ENCODE measurements at regions of chr6 and their contacts with region 1.

Region 1: DNA sequence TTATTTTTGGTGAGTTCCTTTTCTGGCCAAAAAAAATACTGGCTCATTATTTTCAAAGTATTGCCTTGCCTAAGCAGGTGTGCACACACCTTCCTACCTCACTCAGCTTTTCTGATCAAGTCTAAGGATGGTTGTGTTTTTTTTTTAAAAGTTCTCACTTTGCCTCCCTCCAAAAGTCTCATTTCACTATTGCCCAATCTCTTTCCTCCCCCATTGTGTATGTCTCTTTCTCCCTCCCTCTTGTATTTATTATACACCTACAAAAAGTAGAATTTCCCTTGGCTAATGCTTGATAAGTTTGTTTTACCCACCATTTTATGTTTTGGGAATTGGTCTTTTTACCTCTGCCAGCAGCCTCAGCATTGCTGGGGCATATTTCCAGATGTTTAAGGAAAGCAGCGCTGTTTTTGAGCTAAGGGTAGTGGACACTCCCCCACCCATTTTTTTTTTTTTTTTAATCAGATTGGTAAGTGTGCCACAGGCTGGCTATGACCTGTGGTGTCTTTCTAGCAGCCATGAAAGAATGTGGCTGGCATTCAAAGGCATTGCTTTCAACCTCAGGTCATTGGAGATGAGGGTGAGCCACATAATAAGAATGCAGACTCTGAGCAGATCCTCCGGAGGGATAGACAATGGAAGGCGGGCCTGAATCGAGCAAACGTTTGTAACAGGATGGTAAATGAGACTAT is 668.6 kb downstream of the UTRN start:
- DNase-seq: peak; percentile 37
- H3K4me3 ChIP-seq: no peak overlapping the region
- H3K27ac ChIP-seq: peak overlapping the region; percentile 98
- H3K4me1 ChIP-seq: peaks cover 36% of the 10 kb centered on the region
- H3K27me3 ChIP-seq: no peaks in the 10 kb centered on the region
- CTCF ChIP-seq: no peak

Region 2: GRCh38 chr6:144590532-144590931 is 363.2 kb before region 1 on chr6:
- CTCF ChIA-PET with region 1: no interaction called
- POLR2A ChIA-PET with region 1: no interaction called
- intact Hi-C with region 1: loop called (anchors 2 kb)
- DNase-seq: no peak
- H3K4me3 ChIP-seq: no peak overlapping the region
- H3K27ac ChIP-seq: no peak overlapping the region
- H3K4me1 ChIP-seq: peaks cover 48% of the 10 kb centered on the region
- H3K27me3 ChIP-seq: no peaks in the 10 kb centered on the region
- CTCF ChIP-seq: no peak

Region 3: GRCh38 chr6:145137426-145137825 is 183.7 kb after region 1 on chr6:
- CTCF ChIA-PET with region 1: no interaction called
- POLR2A ChIA-PET with region 1: no interaction called
- intact Hi-C with region 1: loop called (anchors 2 kb)
- DNase-seq: peak; percentile 67
- H3K4me3 ChIP-seq: no peak overlapping the region
- H3K27ac ChIP-seq: no peak overlapping the region
- H3K4me1 ChIP-seq: peaks cover 18% of the 10 kb centered on the region
- H3K27me3 ChIP-seq: no peaks in the 10 kb centered on the region
- CTCF ChIP-seq: peak; percentile 36; the same call in 1 of the 2 replicates

Region 4: GRCh38 chr6:145204301-145204700 is 250.6 kb after region 1 on chr6:
- CTCF ChIA-PET with region 1: no interaction called
- POLR2A ChIA-PET with region 1: no interaction called
- intact Hi-C with region 1: no loop called
- DNase-seq: no peak
- H3K4me3 ChIP-seq: no peak overlapping the region
- H3K27ac ChIP-seq: no peak overlapping the region
- H3K4me1 ChIP-seq: no peaks in the 10 kb centered on the region
- H3K27me3 ChIP-seq: no peaks in the 10 kb centered on the region
- CTCF ChIP-seq: no peak

Region 5: DNA sequence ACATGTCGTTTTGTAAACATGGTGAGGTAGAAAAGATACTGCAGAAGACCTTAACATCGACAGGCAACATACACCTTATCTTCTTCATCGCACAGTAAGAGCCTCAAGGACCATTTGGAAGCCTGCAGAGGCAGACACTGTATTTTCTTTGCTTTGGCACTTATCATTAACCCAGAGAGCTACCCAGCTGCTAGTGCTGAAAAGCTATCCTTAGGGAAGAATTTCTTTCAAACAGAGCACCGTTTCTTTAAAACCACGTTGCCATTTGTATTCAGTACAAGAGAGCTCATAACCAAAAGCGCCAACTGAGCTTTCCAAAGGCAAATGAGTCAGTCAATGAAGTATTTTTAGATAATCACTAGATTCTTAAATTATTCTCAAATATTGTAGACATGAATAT is 475.0 kb after region 1 on chr6:
- CTCF ChIA-PET with region 1: no interaction called
- POLR2A ChIA-PET with region 1: no interaction called
- intact Hi-C with region 1: loop called (anchors 10 kb)
- DNase-seq: no peak
- H3K4me3 ChIP-seq: no peak overlapping the region
- H3K27ac ChIP-seq: no peak overlapping the region
- H3K4me1 ChIP-seq: no peaks in the 10 kb centered on the region
- H3K27me3 ChIP-seq: no peaks in the 10 kb centered on the region
- CTCF ChIP-seq: no peak

Region 6: DNA sequence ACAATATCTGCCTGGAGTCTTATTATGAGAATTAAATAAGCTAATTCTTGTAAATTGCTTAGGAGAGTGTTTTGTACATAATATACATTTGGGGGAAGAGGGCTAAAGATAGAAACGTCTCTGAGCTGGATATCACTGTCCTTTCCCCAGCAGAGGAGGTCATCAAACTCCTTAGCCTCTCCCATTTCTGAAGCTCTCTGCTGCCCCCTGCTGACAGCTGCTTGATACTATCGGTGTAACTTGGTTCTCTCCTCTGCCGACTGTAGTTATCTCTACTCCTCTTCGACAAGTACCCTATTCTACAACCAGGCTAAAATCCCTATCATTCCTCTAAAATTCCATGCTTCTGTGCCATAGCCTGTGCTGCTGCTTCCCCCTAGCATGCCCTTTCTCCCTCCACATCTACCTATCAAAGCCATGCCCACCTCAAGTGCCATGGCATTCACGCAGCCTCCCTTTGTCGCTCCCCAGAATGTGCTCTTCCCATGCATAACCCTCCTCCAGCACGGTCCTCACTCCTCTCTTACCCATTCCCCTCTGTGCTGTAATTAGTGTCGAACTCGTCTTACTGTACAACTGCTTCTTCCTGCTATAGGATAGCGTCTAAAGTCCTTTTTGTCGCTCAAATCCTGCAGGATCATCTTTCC is 680.4 kb after region 1 on chr6:
- CTCF ChIA-PET with region 1: no interaction called
- POLR2A ChIA-PET with region 1: no interaction called
- intact Hi-C with region 1: loop called (anchors 2 kb)
- DNase-seq: peak; percentile 91
- H3K4me3 ChIP-seq: no peak overlapping the region
- H3K27ac ChIP-seq: no peak overlapping the region
- H3K4me1 ChIP-seq: peaks cover 39% of the 10 kb centered on the region
- H3K27me3 ChIP-seq: no peaks in the 10 kb centered on the region
- CTCF ChIP-seq: peak; percentile 90

Region 7: GRCh38 chr6:145715426-145715825 is 761.7 kb after region 1 on chr6:
- CTCF ChIA-PET with region 1: no interaction called
- POLR2A ChIA-PET with region 1: no interaction called
- intact Hi-C with region 1: no loop called
- DNase-seq: no peak
- H3K4me3 ChIP-seq: no peak overlapping the region
- H3K27ac ChIP-seq: no peak overlapping the region
- H3K4me1 ChIP-seq: no peaks in the 10 kb centered on the region
- H3K27me3 ChIP-seq: no peaks in the 10 kb centered on the region
- CTCF ChIP-seq: no peak

Measured in A673 (cell line).